GM10248 (cell line): ENCODE measurements at regions of chr1 and their contacts with region 1.

Region 1: DNA sequence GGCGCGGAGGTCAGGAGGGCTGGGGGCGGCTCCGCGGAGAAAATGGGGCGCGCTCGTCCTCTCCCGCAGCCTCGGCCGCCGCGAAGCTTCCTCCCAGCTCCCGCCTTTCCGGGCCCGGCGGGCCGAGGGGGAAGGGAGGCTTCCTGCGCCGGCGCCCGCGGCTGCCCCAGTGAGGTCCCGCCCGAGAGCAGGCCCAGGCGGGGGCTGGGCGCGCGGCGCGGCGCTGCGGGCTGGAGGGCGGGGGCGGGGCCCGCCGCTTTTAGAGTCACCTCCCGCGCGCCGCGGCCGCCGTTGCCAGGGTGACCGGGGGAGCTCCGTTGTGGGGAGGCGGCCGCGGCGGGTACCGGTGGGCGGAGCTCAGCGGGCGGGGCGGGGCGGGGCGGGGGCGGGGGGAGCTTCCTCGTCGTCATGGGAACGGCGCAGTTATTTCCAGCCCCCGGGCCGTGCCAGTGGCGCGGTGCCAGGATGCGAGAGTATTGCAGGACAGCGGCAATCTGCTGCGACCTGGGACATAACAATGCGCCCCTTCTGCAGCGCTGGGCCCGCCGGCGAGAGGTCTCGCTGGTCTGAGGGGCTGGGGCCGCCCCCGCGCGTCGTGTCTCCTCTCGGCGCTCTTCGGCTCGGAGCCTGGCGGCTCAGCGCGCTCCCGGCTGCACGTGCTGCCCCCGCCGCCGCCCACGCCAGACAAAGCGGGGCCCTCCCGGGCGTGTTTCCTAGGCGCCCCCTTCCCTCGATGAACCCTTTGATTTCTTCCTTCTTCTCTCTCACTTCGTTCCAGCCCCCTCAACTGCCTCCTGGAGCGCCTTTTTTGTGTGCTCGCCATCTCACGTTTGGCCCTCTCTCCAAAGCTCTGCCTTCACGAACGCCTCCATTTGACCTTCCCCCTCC is 16.9 kb downstream of the IER5 start:
- DNase-seq: peak; percentile 94
- CTCF ChIP-seq: no peak

Region 2: GRCh38 chr1:181056560-181056959 is 48.8 kb before region 1 on chr1:
- CTCF ChIA-PET with region 1: no interaction called
- POLR2A ChIA-PET with region 1: no interaction called
- DNase-seq: no peak
- CTCF ChIP-seq: no peak

Region 3: GRCh38 chr1:181117638-181118449 is 12.5 kb after region 1 on chr1:
- CTCF ChIA-PET with region 1: interaction called, 18 read pairs
- POLR2A ChIA-PET with region 1: interaction called, 9 read pairs
- DNase-seq: no peak
- CTCF ChIP-seq: no peak

Region 4: DNA sequence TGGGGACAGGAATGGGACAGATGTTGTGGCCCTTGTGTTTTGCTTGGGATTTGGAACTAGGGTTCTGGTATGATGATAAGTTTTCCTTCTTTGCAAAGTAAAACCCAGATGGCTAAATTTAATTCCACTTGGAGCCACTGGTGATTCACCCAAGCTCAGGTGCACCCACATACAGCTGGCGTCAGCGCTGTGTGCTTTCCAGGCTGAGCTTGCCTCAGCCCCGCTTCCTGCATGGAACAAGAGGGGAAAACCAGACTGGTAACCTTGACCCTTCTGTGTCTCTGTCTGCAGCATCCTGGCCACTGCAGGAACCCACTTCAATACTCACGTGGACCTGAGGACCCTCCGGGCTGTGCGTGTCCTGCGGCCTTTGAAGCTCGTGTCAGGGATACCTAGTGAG is 472.1 kb after region 1 on chr1:
- CTCF ChIA-PET with region 1: no interaction called
- POLR2A ChIA-PET with region 1: no interaction called
- DNase-seq: no peak
- CTCF ChIP-seq: no peak